ENCODE measurements at regions of chr1 and their contacts with region 1.

Region 1: GRCh38 chr1:70438529-70438928 is 27.5 kb downstream of the CTH start:
- DNase-seq: no peak
- H3K4me3 Mint-ChIP-seq: no peak overlapping the region
- H3K27ac Mint-ChIP-seq: peak overlapping the region; percentile 3
- H3K4me1 Mint-ChIP-seq: peaks cover 11% of the 10 kb centered on the region
- H3K27me3 Mint-ChIP-seq: no peaks in the 10 kb centered on the region

Region 2: GRCh38 chr1:70504176-70504820 is 65.8 kb after region 1 on chr1:
- CTCF ChIA-PET with region 1: no interaction called
- POLR2A ChIA-PET with region 1: no interaction called
- intact Hi-C with region 1: loop called (anchors 2 kb)
- DNase-seq: peak; percentile 46
- H3K4me3 Mint-ChIP-seq: no peak overlapping the region
- H3K27ac Mint-ChIP-seq: no peak overlapping the region
- H3K4me1 Mint-ChIP-seq: peaks cover 8% of the 10 kb centered on the region
- H3K27me3 Mint-ChIP-seq: peaks cover 10% of the 10 kb centered on the region